ENCODE measurements at regions of chr2 and their contacts with region 1.

Region 1: DNA sequence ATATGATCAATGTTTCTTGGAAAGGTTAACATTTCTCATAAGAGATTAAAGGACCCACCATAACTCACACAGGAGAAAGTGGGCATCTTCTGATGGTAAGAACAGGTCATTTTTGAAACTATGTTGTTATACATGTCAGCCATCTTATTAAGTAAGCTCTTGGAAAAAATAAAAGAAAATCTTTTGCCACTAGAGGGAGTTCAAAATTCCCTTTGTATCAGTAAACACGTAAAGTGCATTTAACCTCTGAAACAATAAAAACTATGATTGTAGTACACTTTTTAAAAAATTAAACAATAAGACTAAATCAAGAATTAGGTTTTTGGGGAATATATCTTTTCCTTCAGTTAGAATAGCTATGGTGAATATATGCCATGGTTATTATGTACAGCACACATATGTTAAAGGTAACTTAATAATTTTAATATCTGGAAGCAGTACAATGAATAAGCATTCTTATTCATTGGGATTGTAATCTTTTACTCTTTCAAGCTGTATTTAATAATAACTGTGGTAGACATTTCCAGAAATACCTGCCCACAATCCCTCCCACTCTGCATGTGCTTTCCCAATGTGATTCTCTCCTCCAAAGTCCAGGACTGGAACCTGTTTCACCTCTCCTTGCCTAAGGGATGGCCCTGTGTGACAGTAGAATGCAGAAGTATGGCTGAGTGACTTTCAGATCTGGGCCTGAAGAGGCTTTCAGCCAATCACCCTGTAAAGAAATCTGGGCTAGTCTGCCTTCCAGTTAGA is 64.2 kb downstream of the RBMS1 start:
- DNase-seq: no peak
- H3K4me3 Mint-ChIP-seq: no peak overlapping the region
- H3K27ac Mint-ChIP-seq: no peak overlapping the region
- H3K4me1 Mint-ChIP-seq: peaks cover 58% of the 10 kb centered on the region
- H3K27me3 Mint-ChIP-seq: no peaks in the 10 kb centered on the region

Region 2: GRCh38 chr2:160054984-160055725 is 374.3 kb before region 1 on chr2:
- intact Hi-C with region 1: no loop called
- DNase-seq: no peak
- H3K4me3 Mint-ChIP-seq: no peak overlapping the region
- H3K27ac Mint-ChIP-seq: no peak overlapping the region
- H3K4me1 Mint-ChIP-seq: peaks cover 4% of the 10 kb centered on the region
- H3K27me3 Mint-ChIP-seq: peaks cover 23% of the 10 kb centered on the region

Region 3: GRCh38 chr2:160332318-160332717 is 97.1 kb before region 1 on chr2:
- intact Hi-C with region 1: loop called (anchors 5 kb)
- DNase-seq: no peak
- H3K4me3 Mint-ChIP-seq: no peak overlapping the region
- H3K27ac Mint-ChIP-seq: peak overlapping the region; percentile 41
- H3K4me1 Mint-ChIP-seq: peaks cover 69% of the 10 kb centered on the region
- H3K27me3 Mint-ChIP-seq: no peaks in the 10 kb centered on the region

Region 4: DNA sequence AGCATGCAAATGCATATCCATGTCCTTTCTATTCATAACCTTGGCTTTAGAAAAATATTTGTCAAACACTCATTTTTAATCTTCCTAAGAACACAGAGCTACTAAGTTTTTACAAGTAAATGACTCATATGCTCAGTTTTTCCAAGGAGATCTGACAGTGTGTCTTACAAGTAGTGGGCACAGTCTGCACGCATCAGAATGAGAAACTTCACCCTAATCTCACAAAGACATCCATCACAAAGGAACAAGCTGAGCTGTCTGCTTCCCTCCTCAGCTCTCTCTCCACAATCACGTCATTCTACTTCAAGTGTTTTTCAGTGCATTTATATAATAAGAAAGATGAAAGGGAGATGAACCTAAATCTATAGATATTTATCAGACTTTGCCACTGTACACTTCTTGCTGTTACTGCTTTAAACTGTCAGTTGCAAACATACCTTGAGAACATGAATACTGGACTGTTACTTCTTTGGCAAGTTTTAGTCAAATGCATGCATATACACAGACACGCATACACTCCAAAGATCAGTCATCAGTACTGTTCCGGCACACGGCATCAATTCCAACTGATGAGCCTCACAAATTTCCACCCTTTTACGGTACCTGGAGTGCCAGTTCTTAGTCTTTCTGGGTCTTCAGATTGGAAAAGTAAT is 11.6 kb before region 1 on chr2:
- intact Hi-C with region 1: loop called (anchors 1 kb)
- DNase-seq: no peak
- H3K4me3 Mint-ChIP-seq: no peak overlapping the region
- H3K27ac Mint-ChIP-seq: peak overlapping the region; percentile 85
- H3K4me1 Mint-ChIP-seq: peaks cover 61% of the 10 kb centered on the region
- H3K27me3 Mint-ChIP-seq: no peaks in the 10 kb centered on the region

Region 5: DNA sequence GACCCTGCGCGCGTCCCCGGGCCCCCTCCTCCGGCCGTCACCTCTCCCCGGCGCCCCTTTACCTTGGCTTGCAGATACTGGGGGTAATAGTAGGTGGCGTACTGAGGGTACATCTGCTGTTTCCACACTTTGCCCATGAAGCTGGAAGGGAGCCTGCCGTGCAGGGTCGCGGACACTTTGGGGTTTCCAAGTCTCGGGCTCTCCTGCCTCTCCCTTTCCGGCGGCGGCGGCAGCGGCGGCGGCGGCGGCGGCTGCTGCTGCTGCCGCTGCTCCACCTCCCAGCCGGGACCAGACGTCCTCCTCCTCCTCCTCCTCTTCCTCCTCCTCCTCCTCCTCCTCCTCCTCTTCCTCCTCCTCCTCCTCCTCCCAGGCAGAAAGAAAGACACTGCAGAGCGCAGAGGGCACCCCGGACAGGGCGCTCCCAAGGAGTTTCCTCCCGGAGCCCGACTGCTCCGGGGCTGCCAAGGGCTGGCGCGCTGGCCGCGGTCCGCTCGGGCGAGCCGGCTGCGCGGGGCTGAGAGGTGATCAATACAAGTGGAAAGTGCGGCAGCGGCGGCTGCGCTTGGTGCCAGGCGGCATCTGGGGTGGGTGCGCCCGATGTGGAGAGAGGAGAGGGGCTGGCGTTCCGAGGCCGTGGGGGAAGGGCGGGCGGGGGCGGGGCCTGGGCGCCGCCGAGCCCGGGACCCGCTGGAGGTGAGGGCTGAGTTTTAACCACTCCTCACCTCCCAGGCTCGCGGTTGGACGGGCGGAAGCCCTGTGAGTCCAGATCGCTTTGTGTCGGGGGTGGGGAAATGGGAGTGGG is 64.0 kb after region 1 on chr2 and contains the start of gene RBMS1:
- intact Hi-C with region 1: loop called (anchors 2 kb)
- DNase-seq: peak; percentile 35
- H3K4me3 Mint-ChIP-seq: peak within 1 kb of the TSS; percentile 93
- H3K27ac Mint-ChIP-seq: peak within 1 kb of the TSS; percentile 91
- H3K4me1 Mint-ChIP-seq: peaks cover 43% of the 10 kb centered on the region
- H3K27me3 Mint-ChIP-seq: peaks cover 28% of the 10 kb centered on the region
- total RNA-seq, gene RBMS1: 40.1 and 42.2 TPM in 2 replicates

Region 6: DNA sequence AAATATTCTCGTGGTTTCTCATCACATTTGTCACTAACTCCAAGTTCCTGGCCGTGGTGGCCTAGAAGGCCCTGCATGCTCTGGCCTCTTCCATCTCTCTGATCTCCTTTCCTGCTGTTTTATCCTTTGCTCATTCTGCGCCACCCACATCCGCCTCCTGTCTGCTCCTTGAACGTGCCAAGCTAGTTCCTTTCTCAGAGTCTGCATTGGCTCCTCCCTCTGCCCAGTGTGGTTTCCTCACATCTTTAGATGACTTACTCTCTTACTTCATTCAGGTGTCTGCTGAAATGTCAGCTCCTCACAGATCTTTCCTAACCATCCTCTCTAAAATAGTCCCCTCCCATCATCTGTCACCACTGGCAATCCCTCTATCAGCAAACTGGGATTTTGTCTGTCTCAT is 222.8 kb after region 1 on chr2:
- intact Hi-C with region 1: loop called (anchors 5 kb)
- DNase-seq: peak; percentile 55
- H3K4me3 Mint-ChIP-seq: peak overlapping the region; percentile 6
- H3K27ac Mint-ChIP-seq: peak overlapping the region; percentile 10
- H3K4me1 Mint-ChIP-seq: peaks cover 26% of the 10 kb centered on the region
- H3K27me3 Mint-ChIP-seq: peaks cover 14% of the 10 kb centered on the region